ENCODE measurements at regions of chr16 and their contacts with region 1.

Region 1: DNA sequence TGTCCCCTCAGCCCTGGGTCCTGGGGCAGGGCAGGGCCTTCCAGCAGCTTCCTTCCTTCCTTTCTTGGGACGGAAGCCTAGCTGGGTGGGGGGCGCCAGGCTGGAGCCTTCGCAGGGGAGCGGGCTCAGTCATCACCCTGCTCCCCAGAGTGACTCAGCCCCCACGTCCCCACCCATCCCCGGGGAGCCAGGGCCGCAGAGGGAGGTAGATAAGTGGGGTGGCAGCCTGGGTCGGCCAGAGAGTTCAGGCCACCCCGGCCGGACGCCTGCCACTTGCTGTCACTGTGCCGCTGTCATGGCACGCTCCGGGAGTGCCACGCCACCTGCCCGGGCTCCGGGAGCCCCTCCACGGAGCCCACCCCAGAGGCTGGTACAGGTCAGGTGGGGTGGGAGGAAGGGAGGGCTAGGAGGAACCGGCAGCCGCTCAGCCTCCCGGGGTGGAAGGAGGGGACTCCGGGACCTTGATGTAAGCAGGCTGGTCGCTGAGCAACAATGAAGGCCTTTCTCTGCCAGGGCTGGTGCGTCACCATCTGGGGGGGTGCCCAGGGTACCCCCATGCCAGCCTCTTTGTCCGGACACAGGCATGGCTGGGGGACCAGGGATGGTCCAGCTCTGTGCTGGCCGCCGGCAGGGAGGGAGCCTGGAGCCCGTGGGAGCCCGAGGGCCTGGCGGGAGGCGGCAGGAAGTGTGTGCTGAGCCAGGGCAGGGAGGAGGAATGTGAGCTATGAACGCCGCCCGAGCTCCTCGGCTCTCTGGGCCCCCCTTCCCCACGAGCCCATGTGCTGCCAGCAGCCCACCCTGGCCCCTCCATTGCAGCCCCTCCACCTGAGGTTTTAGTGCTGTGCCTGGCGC is 6.6 kb downstream of the NHERF2 start:
- DNase-seq: peak; percentile 53
- ATAC-seq: peak; percentile 63
- H3K4me3 ChIP-seq: peak overlapping the region; percentile 24 to 69 (median 46); a peak in 5 of 6 replicates
- H3K27ac ChIP-seq: peak overlapping the region; percentile 89
- H3K4me1 ChIP-seq: peaks cover 83% of the 10 kb centered on the region
- H3K27me3 ChIP-seq: no peaks in the 10 kb centered on the region
- CTCF ChIP-seq: no peak
- EP300 ChIP-seq: no peak
- POLR2A ChIP-seq: no peak
- RAD21 ChIP-seq: no peak

Region 2: GRCh38 chr16:2016407-2016922 is 16.8 kb before region 1 on chr16:
- CTCF ChIA-PET with region 1: no interaction called
- POLR2A ChIA-PET with region 1: interaction called, 18 read pairs
- in situ Hi-C with region 1: no loop called
- intact Hi-C with region 1: no loop called
- DNase-seq: peak; percentile 41
- ATAC-seq: peak; percentile 52
- H3K4me3 ChIP-seq: no peak overlapping the region; a peak in 1 of 6 replicates
- H3K27ac ChIP-seq: no peak overlapping the region
- H3K4me1 ChIP-seq: peaks cover 62% of the 10 kb centered on the region
- H3K27me3 ChIP-seq: peaks cover 2 to 20% of the 10 kb centered on the region in 2 experiments; a peak in 2 of 5 replicates
- CTCF ChIP-seq: peak; percentile 79
- EP300 ChIP-seq: no peak
- POLR2A ChIP-seq: no peak
- RAD21 ChIP-seq: peak; percentile 21; the same call in 1 of the 2 replicates

Region 3: GRCh38 chr16:2047330-2048115 is 14.2 kb after region 1 on chr16 and contains the starts of genes NTHL1 and TSC2:
- CTCF ChIA-PET with region 1: no interaction called
- POLR2A ChIA-PET with region 1: interaction called, 67 read pairs
- in situ Hi-C with region 1: no loop called
- intact Hi-C with region 1: no loop called
- DNase-seq: peak; percentile 93
- ATAC-seq: peak; percentile 91
- H3K4me3 ChIP-seq: peak within 1 kb of the TSS; percentile 86 to 95 (median 90)
- H3K27ac ChIP-seq: peak within 1 kb of the TSS; percentile 63
- H3K4me1 ChIP-seq: peaks cover 25% of the 10 kb centered on the region
- H3K27me3 ChIP-seq: peaks cover 0 to 2% of the 10 kb centered on the region in 2 experiments; a peak in 1 of 5 replicates
- CTCF ChIP-seq: peak; percentile 54
- EP300 ChIP-seq: 0 out of 4 replicates have a peak, but pooled peaks of 1 of the 2 experiments have one; percentile 24
- POLR2A ChIP-seq: peak in 1 of 2 experiments; percentile 68; a peak in 1 of 4 replicates
- RAD21 ChIP-seq: peak; percentile 53
- total RNA-seq, gene NTHL1: 64.8 and 64.9 TPM in 2 replicates
- total RNA-seq, gene TSC2: 10.3 and 19.6 TPM in 2 replicates